AG04450 (cell line): ENCODE measurements at regions of chr3 and their contacts with region 1.

Region 1: GRCh38 chr3:143016321-143016972 is 15.1 kb downstream of the U2SURP start:
- DNase-seq: no peak
- H3K4me3 ChIP-seq: no peak overlapping the region
- H3K27ac ChIP-seq: no peak overlapping the region
- H3K27me3 ChIP-seq: no peaks in the 10 kb centered on the region
- CTCF ChIP-seq: peak; percentile 46

Region 2: GRCh38 chr3:143031327-143031726 is 14.9 kb after region 1 on chr3:
- CTCF ChIA-PET with region 1: interaction called, 10 read pairs
- POLR2A ChIA-PET with region 1: no interaction called
- DNase-seq: no peak
- H3K4me3 ChIP-seq: no peak overlapping the region
- H3K27ac ChIP-seq: no peak overlapping the region
- H3K27me3 ChIP-seq: no peaks in the 10 kb centered on the region
- CTCF ChIP-seq: no peak